MCF 10A (cell line): ENCODE measurements at regions of chr13 and their contacts with region 1.

Region 1: DNA sequence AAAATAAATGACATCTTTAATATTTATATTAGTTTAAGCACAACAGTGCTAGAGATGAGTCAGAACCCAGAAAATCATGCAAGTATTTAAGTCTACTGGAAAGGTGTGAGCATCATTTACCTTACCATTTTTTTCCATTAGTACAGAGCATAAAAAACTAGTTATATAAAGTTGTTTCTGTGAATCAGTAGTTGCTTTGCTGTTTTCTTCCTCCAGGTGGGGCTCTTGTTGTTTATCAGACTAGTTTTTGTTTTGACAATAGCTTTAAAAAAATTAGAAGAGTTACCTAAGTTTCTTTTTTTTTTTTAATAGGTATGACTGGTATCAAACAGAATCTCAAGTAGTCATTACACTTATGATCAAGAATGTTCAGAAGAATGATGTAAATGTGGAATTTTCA is 12.7 kb downstream of the SUGT1 start:
- DNase-seq: peak; percentile 30
- H3K4me3 Mint-ChIP-seq: no peak overlapping the region
- H3K27ac Mint-ChIP-seq: no peak overlapping the region
- H3K4me1 Mint-ChIP-seq: peaks cover 6% of the 10 kb centered on the region
- H3K27me3 Mint-ChIP-seq: no peaks in the 10 kb centered on the region
- CTCF ChIP-seq: peak; percentile 42

Region 2: GRCh38 chr13:52677823-52678222 is 12.5 kb after region 1 on chr13:
- CTCF ChIA-PET with region 1: interaction called, 13 read pairs
- POLR2A ChIA-PET with region 1: no interaction called
- intact Hi-C with region 1: no loop called
- DNase-seq: no peak
- H3K4me3 Mint-ChIP-seq: no peak overlapping the region
- H3K27ac Mint-ChIP-seq: no peak overlapping the region
- H3K4me1 Mint-ChIP-seq: no peaks in the 10 kb centered on the region
- H3K27me3 Mint-ChIP-seq: no peaks in the 10 kb centered on the region
- CTCF ChIP-seq: no peak

Region 3: DNA sequence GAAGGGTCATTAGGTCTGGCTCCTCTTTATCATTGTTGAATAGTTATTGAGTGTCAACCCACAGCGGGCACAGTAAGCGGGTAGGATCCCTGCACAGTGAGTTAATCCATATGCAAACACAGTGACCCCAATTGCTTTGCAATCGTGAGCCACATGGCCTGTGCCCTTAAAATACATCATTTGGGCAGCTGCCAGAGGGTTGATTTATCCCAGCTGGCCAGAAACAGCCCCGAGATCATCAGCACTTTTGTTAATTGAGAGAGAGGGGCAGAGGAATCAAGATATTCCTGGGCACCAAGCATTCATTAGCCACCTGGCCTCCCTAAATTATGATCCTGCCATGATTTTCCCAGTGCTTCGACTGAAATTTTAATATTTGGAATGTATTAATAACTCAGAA is 84.1 kb after region 1 on chr13:
- CTCF ChIA-PET with region 1: no interaction called
- POLR2A ChIA-PET with region 1: no interaction called
- intact Hi-C with region 1: no loop called
- DNase-seq: no peak
- H3K4me3 Mint-ChIP-seq: no peak overlapping the region
- H3K27ac Mint-ChIP-seq: no peak overlapping the region
- H3K4me1 Mint-ChIP-seq: no peaks in the 10 kb centered on the region
- H3K27me3 Mint-ChIP-seq: peaks cover 61% of the 10 kb centered on the region
- CTCF ChIP-seq: no peak

Region 4: DNA sequence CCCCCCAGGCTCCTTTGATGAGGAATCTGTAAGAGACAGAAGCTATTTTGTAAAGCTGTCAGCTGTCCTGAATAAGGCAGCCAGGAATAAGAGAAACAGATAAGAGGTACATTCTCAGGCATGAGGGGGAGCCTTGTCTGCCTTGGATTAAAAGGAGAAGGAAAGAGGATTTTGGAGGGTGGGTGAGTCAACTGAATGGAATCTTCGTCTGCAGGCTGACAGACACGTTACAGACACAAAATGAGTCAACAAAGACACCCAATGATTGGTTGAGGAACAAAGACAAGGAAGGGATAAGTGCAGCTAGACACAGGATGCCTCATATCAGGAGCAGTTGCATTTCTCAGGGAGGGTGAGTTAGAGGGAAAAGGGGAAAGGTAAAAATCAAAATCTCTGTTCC is 525.8 kb after region 1 on chr13:
- CTCF ChIA-PET with region 1: interaction called, 5 read pairs
- POLR2A ChIA-PET with region 1: interaction called, 3 read pairs
- intact Hi-C with region 1: loop called (anchors 2 kb)
- DNase-seq: peak; percentile 83
- H3K4me3 Mint-ChIP-seq: no peak overlapping the region
- H3K27ac Mint-ChIP-seq: no peak overlapping the region
- H3K4me1 Mint-ChIP-seq: peaks cover 13% of the 10 kb centered on the region
- H3K27me3 Mint-ChIP-seq: no peaks in the 10 kb centered on the region
- CTCF ChIP-seq: no peak